MCF 10A (cell line): ENCODE measurements at regions of chr17 and their contacts with region 1.

Region 1: GRCh38 chr17:143782-144281 is 6.5 kb downstream of the SCGB1C2 start:
- DNase-seq: peak; percentile 68
- H3K4me3 Mint-ChIP-seq: no peak overlapping the region
- H3K27ac Mint-ChIP-seq: no peak overlapping the region
- H3K4me1 Mint-ChIP-seq: no peaks in the 10 kb centered on the region
- H3K27me3 Mint-ChIP-seq: peaks cover 11% of the 10 kb centered on the region
- CTCF ChIP-seq: peak; percentile 97

Region 2: GRCh38 chr17:222172-222571 is 78.3 kb after region 1 on chr17:
- CTCF ChIA-PET with region 1: no interaction called
- POLR2A ChIA-PET with region 1: no interaction called
- intact Hi-C with region 1: no loop called
- DNase-seq: no peak
- H3K4me3 Mint-ChIP-seq: no peak overlapping the region
- H3K27ac Mint-ChIP-seq: no peak overlapping the region
- H3K4me1 Mint-ChIP-seq: no peaks in the 10 kb centered on the region
- H3K27me3 Mint-ChIP-seq: peaks cover 10% of the 10 kb centered on the region
- CTCF ChIP-seq: no peak

Region 3: GRCh38 chr17:259991-260791 is 116.4 kb after region 1 on chr17:
- CTCF ChIA-PET with region 1: no interaction called
- POLR2A ChIA-PET with region 1: no interaction called
- intact Hi-C with region 1: no loop called
- DNase-seq: no peak
- H3K4me3 Mint-ChIP-seq: no peak overlapping the region
- H3K27ac Mint-ChIP-seq: no peak overlapping the region
- H3K4me1 Mint-ChIP-seq: no peaks in the 10 kb centered on the region
- H3K27me3 Mint-ChIP-seq: peaks cover 31% of the 10 kb centered on the region
- CTCF ChIP-seq: no peak

Region 4: DNA sequence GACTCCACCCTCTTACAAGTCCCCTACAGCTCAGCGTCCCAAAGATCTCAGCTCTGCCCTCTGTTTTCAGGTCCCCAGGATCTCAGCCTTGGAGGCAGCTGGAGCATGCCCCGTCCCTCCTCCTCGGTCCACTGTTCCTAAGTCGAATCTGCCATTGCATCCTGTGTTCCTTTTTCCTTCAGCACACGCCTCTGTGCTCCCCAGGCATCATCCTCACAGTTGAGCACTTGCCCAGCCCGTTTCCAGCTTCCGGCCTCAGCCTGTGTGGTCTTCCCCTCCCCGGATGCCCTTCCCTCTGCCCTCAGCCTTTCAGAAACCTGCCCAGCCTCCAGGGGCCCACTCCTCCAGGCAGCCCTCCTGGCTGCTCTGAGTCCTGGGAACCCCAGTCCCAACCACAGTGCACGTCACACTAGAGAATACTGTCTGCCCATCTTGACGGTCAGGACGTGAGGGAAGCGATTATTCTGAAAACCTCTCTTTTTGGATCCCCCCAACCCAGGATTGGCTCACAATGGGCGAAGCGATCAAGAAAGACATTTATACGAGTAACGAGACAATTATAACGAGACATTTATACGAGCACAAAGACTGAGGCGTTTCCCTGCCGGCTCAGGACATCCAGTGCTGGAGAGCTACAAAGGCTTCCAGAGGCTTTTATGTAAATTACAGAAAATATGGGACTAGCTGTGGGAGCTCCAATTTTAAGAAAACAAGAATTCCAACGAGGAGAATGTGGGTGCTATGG is 167.5 kb after region 1 on chr17:
- CTCF ChIA-PET with region 1: no interaction called
- POLR2A ChIA-PET with region 1: no interaction called
- intact Hi-C with region 1: no loop called
- DNase-seq: no peak
- H3K4me3 Mint-ChIP-seq: no peak overlapping the region
- H3K27ac Mint-ChIP-seq: no peak overlapping the region
- H3K4me1 Mint-ChIP-seq: no peaks in the 10 kb centered on the region
- H3K27me3 Mint-ChIP-seq: peaks cover 22% of the 10 kb centered on the region
- CTCF ChIP-seq: no peak

Region 5: DNA sequence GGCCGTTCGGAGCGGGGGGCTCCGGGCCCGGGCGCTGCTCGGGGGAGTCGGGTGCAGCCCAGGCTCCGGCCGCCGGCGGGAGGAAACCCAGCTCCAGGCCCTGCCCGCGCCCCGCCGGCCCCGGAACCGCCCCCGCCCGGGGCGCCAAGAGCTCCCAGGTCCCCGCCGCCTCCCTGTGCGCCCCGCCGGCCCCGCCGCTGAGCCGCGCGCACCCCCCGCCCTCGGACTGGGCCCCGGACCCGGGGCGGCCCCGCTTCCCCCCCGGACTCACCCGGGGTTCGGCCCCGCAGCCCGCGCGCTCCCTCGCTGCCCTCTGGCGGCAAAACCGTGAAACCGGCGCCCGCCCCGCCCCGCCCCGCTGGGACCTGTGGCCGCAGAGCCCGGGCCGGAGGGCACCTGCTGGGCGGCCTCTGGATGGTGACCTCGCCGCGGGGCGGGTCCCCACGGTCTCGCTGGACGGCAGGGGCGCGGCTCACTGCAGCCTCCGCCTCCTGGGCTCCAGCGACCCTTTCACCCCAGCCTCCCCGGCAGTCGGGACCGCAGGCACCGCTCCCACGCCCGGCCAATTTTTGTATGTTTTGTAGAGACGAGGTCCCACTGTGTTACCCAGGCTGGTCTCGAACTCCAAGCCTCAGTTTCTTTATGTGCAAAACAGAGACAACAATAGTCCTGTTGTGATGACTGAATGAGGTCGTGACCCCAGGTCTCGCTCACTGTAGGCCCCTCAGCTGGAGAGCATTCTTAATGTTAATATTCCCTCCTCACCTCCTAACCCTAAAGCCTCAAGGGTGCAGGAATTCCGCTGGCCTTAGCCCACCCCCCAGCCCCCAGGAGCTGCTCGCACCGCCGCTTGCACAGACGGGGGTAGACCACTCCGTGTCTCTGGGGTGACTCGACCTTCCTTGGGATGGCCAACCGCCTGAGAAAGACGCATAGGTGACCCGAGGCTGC is 242.4 kb after region 1 on chr17:
- CTCF ChIA-PET with region 1: interaction called, 15 read pairs
- POLR2A ChIA-PET with region 1: no interaction called
- intact Hi-C with region 1: loop called (anchors 2 kb)
- DNase-seq: peak; percentile 49
- H3K4me3 Mint-ChIP-seq: peak overlapping the region; percentile 64
- H3K27ac Mint-ChIP-seq: no peak overlapping the region
- H3K4me1 Mint-ChIP-seq: no peaks in the 10 kb centered on the region
- H3K27me3 Mint-ChIP-seq: peaks cover 12% of the 10 kb centered on the region
- CTCF ChIP-seq: peak; percentile 70